GM10248 (cell line): ENCODE measurements at regions of chr9 and their contacts with region 1.

Region 1: DNA sequence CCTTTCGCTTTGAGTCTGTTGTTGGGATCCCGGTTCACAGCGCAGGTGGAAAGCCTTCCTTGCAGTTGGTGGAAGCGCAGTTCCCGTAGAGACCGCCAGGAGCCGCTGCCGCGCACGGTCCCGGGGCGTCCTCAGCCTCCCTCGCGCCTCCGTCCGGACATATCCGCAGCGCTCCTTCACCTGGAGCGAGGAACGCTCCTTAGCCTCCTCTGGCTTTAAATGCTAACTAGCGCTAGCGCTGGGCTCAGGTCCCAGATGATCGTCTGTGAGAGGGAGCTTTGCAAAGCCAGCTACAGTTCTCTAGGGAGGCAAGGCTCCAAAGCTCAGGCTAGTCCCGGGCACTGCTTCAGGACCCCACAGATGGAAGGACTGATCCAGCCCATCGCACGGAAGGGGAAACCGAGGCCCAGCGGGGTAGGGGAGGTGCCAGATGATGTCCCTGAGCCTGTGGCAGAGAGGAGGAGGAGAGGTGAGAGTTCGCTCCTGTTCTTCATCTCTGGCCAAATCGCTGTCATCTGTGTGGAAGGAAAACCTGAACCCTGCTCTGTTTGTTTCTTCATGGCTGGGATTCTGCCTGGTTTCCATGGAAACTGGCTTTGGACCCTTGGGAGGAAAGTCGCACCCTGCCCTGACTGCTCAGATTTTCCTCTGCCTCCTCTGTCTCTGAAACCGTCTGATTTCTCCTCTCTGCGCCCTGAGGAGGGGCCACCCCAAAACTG is 31.4 kb downstream of the COL15A1 start:
- DNase-seq: peak; percentile 89
- CTCF ChIP-seq: peak; percentile 97

Region 2: DNA sequence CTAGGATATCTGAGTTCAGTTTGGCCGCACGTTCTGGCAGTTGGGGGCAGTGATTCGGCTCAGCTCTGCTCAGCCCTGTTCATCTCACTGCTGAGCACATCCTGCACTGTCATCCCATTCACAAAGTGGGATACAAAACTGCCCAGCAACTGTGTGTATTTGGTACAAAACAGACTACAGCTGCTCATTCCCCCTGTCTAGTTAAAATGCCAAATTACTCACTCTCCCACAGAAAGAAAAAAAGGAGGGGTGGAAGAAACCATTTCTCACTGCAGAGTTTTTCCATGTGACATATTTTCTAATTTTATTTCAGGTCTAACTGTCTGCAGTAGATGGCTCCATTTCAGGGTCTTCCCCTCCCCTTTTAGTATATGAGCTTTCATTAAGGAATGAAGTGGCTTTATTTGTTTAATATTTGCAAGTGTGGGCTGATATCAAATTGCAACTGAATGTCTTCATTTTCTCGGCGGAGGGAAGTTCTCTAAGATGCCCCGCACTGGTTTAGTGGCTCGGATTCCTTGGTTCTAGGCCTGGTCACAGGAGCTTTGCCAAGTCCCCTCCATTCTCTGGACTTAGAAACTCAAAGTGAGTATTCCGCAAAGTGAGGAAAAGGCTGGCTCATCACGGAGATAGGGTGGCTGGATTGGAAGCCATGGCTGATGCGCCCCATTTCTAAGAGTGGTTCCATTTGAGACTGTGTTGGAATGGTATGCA is 16.7 kb before region 1 on chr9:
- CTCF ChIA-PET with region 1: interaction called, 26 read pairs
- POLR2A ChIA-PET with region 1: no interaction called
- DNase-seq: no peak
- CTCF ChIP-seq: no peak

Region 3: DNA sequence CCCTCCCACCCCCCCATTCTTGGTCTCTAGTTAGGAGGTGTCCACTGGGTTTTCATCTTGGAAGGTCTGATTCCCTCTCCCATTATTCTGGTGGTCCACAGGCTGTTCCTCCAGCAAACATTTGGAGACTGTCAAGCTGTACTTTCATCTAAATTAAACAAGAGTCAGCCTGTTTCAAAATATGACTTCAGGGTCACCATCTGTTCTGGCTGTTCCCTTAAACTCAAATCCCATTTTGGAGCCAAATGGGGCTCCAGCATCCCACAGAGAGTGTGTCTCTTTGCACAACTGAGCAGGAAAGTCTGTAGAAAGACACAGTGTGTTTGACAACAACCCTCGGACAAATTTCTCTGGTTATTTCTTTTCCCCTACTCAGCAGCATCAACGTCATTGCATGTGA is 11.0 kb before region 1 on chr9:
- CTCF ChIA-PET with region 1: interaction called, 26 read pairs
- POLR2A ChIA-PET with region 1: no interaction called
- DNase-seq: no peak
- CTCF ChIP-seq: no peak